CD4-positive, alpha-beta memory T cell (primary cell): ENCODE measurements at regions of chr4 and their contacts with region 1.

Region 1: DNA sequence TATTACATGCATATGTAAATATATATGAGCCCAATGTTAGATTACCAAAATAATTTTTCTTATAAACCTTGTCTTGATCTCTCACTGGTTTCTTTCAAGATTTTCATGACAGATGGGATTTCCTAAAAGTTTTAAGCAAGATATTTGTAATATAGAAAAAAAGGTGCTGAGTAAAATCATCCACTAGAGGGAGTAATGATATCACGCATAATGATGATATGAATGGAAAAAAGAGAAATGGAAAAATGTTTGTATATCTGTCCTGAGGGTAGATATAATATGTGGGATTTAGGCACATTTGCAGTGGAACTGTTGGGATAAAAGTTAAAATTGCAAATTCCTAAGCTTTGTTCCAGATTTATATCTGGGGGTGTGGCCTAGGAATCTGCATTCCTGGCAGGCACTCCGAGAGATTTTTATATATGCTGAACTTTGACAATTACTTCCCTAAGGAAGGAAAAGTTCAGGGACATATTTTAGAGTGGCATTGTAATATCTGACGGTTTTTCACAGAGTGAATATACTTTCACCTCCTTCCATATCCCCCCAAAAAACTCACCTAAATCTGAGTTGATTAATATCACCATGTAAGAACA is 60.5 kb downstream of the TMA16 start:
- DNase-seq: peak in 4 of 5 donors; percentile 34 to 43 (median 38)
- H3K4me3 ChIP-seq: no peak overlapping the region
- H3K4me3 Mint-ChIP-seq: no peak overlapping the region
- H3K27ac ChIP-seq: no peak overlapping the region
- H3K27ac Mint-ChIP-seq: peak overlapping the region in 2 of 7 donors; percentile 2 to 10
- H3K4me1 ChIP-seq: peaks cover 38% of the 10 kb centered on the region
- H3K4me1 Mint-ChIP-seq: peaks cover 29 to 43% (median 31%) of the 10 kb centered on the region in 4 donors
- H3K27me3 ChIP-seq: no peaks in the 10 kb centered on the region
- H3K27me3 Mint-ChIP-seq: no peaks in the 10 kb centered on the region

Region 2: DNA sequence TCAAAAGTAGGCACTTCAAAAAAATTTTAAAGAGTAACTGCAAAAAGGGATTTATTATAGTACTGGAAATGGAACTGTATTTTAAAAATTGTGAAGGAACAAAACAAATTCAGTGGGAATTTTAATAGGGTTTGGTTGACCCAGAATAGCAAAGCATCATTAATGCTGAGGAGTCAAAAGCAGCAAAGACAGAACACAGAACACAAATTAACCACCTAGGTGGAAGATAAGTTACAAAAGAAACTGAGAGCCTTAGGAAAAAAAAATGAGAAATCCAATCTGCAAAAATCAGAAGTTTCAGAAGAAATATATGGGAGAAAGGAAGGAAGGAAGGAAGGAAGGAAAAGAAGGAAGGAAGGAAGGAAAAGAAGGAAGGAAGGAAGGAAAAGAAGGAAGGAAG is 339.1 kb before region 1 on chr4:
- CTCF ChIA-PET with region 1: no interaction called
- POLR2A ChIA-PET with region 1: no interaction called
- intact Hi-C with region 1: no loop called
- DNase-seq: no peak
- H3K4me3 ChIP-seq: no peak overlapping the region
- H3K4me3 Mint-ChIP-seq: no peak overlapping the region
- H3K27ac ChIP-seq: no peak overlapping the region
- H3K27ac Mint-ChIP-seq: no peak overlapping the region
- H3K4me1 ChIP-seq: no peaks in the 10 kb centered on the region
- H3K4me1 Mint-ChIP-seq: no peaks in the 10 kb centered on the region
- H3K27me3 ChIP-seq: no peaks in the 10 kb centered on the region
- H3K27me3 Mint-ChIP-seq: peaks cover 6 to 8% of the 10 kb centered on the region in 2 donors

Region 3: GRCh38 chr4:163494360-163495162 is 60.4 kb before region 1 on chr4 and contains the start of gene TMA16:
- CTCF ChIA-PET with region 1: interaction called, 40 read pairs
- POLR2A ChIA-PET with region 1: interaction called, 7 read pairs
- intact Hi-C with region 1: no loop called
- DNase-seq: peak; percentile 79 to 85 (median 83)
- H3K4me3 ChIP-seq: peak within 1 kb of the TSS; percentile 77 to 98
- H3K4me3 Mint-ChIP-seq: peak within 1 kb of the TSS; percentile 91 to 98 (median 96)
- H3K27ac ChIP-seq: peak within 1 kb of the TSS; percentile 75
- H3K27ac Mint-ChIP-seq: peak within 1 kb of the TSS; percentile 90 to 99 (median 96)
- H3K4me1 ChIP-seq: peaks cover 33% of the 10 kb centered on the region
- H3K4me1 Mint-ChIP-seq: peaks cover 20 to 40% (median 33%) of the 10 kb centered on the region in 4 donors
- H3K27me3 ChIP-seq: no peaks in the 10 kb centered on the region
- H3K27me3 Mint-ChIP-seq: peaks cover 1 to 4% of the 10 kb centered on the region in 2 donors
- total RNA-seq, gene TMA16: 24.6 to 25.0 TPM

Region 4: GRCh38 chr4:163663454-163664225 is 108.7 kb after region 1 on chr4:
- CTCF ChIA-PET with region 1: interaction called, 144 read pairs
- POLR2A ChIA-PET with region 1: interaction called, 5 read pairs
- intact Hi-C with region 1: loop called (anchors 5 kb)
- DNase-seq: no peak
- H3K4me3 ChIP-seq: no peak overlapping the region
- H3K4me3 Mint-ChIP-seq: peak overlapping the region in 4 of 8 donors; percentile 10 to 45 (median 21)
- H3K27ac ChIP-seq: no peak overlapping the region
- H3K27ac Mint-ChIP-seq: peak overlapping the region in 4 of 7 donors; percentile 20 to 79 (median 44)
- H3K4me1 ChIP-seq: peaks cover 48% of the 10 kb centered on the region
- H3K4me1 Mint-ChIP-seq: peaks cover 38 to 53% (median 48%) of the 10 kb centered on the region in 4 donors
- H3K27me3 ChIP-seq: no peaks in the 10 kb centered on the region
- H3K27me3 Mint-ChIP-seq: no peaks in the 10 kb centered on the region

Region 5: GRCh38 chr4:163755013-163755412 is 200.0 kb after region 1 on chr4:
- CTCF ChIA-PET with region 1: interaction called, 132 read pairs
- POLR2A ChIA-PET with region 1: no interaction called
- intact Hi-C with region 1: loop called (anchors 1 kb)
- DNase-seq: peak in 4 of 5 donors; percentile 32 to 43 (median 38)
- H3K4me3 ChIP-seq: no peak overlapping the region
- H3K4me3 Mint-ChIP-seq: peak overlapping the region in 2 of 8 donors; percentile 29 to 39
- H3K27ac ChIP-seq: no peak overlapping the region
- H3K27ac Mint-ChIP-seq: no peak overlapping the region
- H3K4me1 ChIP-seq: no peaks in the 10 kb centered on the region
- H3K4me1 Mint-ChIP-seq: peaks cover 0 to 8% (median 3%) of the 10 kb centered on the region in 4 donors
- H3K27me3 ChIP-seq: no peaks in the 10 kb centered on the region
- H3K27me3 Mint-ChIP-seq: peaks cover 0 to 2% of the 10 kb centered on the region in 2 donors

Region 6: GRCh38 chr4:164731827-164732474 is 1177.0 kb after region 1 on chr4:
- CTCF ChIA-PET with region 1: interaction called, 178 read pairs
- POLR2A ChIA-PET with region 1: no interaction called
- intact Hi-C with region 1: loop called (anchors 1 kb)
- DNase-seq: peak in 4 of 5 donors; percentile 21 to 46 (median 34)
- H3K4me3 ChIP-seq: no peak overlapping the region
- H3K4me3 Mint-ChIP-seq: no peak overlapping the region
- H3K27ac ChIP-seq: no peak overlapping the region
- H3K27ac Mint-ChIP-seq: no peak overlapping the region
- H3K4me1 ChIP-seq: no peaks in the 10 kb centered on the region
- H3K4me1 Mint-ChIP-seq: peaks cover 0 to 2% (median 0%) of the 10 kb centered on the region in 4 donors
- H3K27me3 ChIP-seq: no peaks in the 10 kb centered on the region
- H3K27me3 Mint-ChIP-seq: peaks cover 2 to 3% of the 10 kb centered on the region in 2 donors

Region 7: GRCh38 chr4:165096776-165097175 is 1541.8 kb after region 1 on chr4:
- CTCF ChIA-PET with region 1: interaction called, 8 read pairs
- POLR2A ChIA-PET with region 1: no interaction called
- intact Hi-C with region 1: loop called (anchors 5 kb)
- DNase-seq: peak in 1 of 5 donors; percentile 8
- H3K4me3 ChIP-seq: no peak overlapping the region
- H3K4me3 Mint-ChIP-seq: no peak overlapping the region
- H3K27ac ChIP-seq: no peak overlapping the region
- H3K27ac Mint-ChIP-seq: no peak overlapping the region
- H3K4me1 ChIP-seq: no peaks in the 10 kb centered on the region
- H3K4me1 Mint-ChIP-seq: no peaks in the 10 kb centered on the region
- H3K27me3 ChIP-seq: no peaks in the 10 kb centered on the region
- H3K27me3 Mint-ChIP-seq: no peaks in the 10 kb centered on the region